Activated naive CD4-positive, alpha-beta T cell treated with anti-CD3 and anti-CD28 coated beads for 36 hours (primary cell): ENCODE measurements at regions of chr12 and their contacts with region 1.

Region 1: DNA sequence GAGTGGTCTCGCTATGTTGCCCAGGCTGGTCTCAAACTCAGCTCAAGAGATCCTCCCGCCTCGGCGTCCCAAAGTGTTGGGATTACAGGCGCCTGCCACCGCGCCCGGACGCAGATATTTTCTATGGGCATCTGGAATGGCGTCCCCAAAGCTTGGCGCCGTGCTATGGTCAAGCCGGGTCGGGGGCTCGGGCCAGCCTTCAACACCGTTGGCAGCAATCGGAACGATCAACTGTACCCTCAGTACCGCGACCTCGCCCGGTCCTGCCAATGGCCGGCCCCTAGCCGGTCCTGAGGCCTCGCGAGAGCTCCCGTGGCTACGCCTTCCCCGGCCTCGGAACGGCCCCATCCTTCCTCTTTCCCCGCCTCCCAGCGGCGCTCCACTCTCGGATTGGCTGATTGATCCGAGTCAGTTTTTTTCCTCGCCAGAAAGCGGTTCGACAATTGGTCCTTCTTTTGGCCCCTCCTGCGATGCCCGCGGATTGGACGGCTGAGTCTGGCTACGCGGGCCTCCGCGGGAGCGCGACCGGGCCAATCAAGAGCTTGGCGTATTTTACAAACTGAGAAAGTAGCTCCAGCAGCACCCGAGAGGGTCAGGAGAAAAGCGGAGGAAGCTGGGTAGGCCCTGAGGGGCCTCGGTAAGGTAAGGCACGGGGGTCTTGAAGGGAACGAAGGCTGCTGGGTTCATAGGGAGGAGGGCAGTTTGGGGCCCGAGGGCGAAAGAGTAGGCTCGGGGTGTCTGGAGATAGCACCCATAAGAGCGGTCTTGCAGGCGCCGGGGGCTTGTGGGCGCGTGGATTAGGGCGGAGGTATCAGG is at the start of gene TROAP:
- DNase-seq: peak; percentile 99
- H3K4me3 Mint-ChIP-seq: peak within 1 kb of the TSS; percentile 98
- H3K27ac Mint-ChIP-seq: peak within 1 kb of the TSS; percentile 91
- H3K4me1 Mint-ChIP-seq: peaks cover 17% of the 10 kb centered on the region
- H3K27me3 Mint-ChIP-seq: no peaks in the 10 kb centered on the region
- total RNA-seq, gene TROAP: 67.4 to 68.8 TPM

Region 2: GRCh38 chr12:49154221-49154620 is 168.7 kb before region 1 on chr12:
- CTCF ChIA-PET with region 1: no interaction called
- intact Hi-C with region 1: no loop called
- DNase-seq: no peak
- H3K4me3 Mint-ChIP-seq: no peak overlapping the region
- H3K27ac Mint-ChIP-seq: no peak overlapping the region
- H3K4me1 Mint-ChIP-seq: peaks cover 2% of the 10 kb centered on the region
- H3K27me3 Mint-ChIP-seq: no peaks in the 10 kb centered on the region

Region 3: GRCh38 chr12:49188914-49189367 is 134.0 kb before region 1 on chr12 and contains the start of gene TUBA1A:
- CTCF ChIA-PET with region 1: no interaction called
- intact Hi-C with region 1: loop called (anchors 1 kb)
- DNase-seq: peak; percentile 97
- H3K4me3 Mint-ChIP-seq: peak within 1 kb of the TSS; percentile 84
- H3K27ac Mint-ChIP-seq: peak within 1 kb of the TSS; percentile 86
- H3K4me1 Mint-ChIP-seq: peaks cover 13% of the 10 kb centered on the region
- H3K27me3 Mint-ChIP-seq: no peaks in the 10 kb centered on the region
- total RNA-seq, gene TUBA1A: 47.4 to 49.1 TPM

Region 4: GRCh38 chr12:49336645-49337584 is 14.0 kb after region 1 on chr12 and contains the start of gene C1QL4:
- CTCF ChIA-PET with region 1: interaction called, 29 read pairs
- intact Hi-C with region 1: loop called (anchors 1 kb)
- DNase-seq: peak; percentile 90
- H3K4me3 Mint-ChIP-seq: peak within 1 kb of the TSS; percentile 57
- H3K27ac Mint-ChIP-seq: no peak within 1 kb of the TSS
- H3K4me1 Mint-ChIP-seq: peaks cover 25% of the 10 kb centered on the region
- H3K27me3 Mint-ChIP-seq: peaks cover 78% of the 10 kb centered on the region
- total RNA-seq, gene C1QL4: not detected

Region 5: GRCh38 chr12:49366652-49367380 is 43.9 kb after region 1 on chr12:
- CTCF ChIA-PET with region 1: no interaction called
- intact Hi-C with region 1: loop called (anchors 1 kb)
- DNase-seq: peak; percentile 90
- H3K4me3 Mint-ChIP-seq: peak overlapping the region; percentile 95
- H3K27ac Mint-ChIP-seq: peak overlapping the region; percentile 95
- H3K4me1 Mint-ChIP-seq: peaks cover 23% of the 10 kb centered on the region
- H3K27me3 Mint-ChIP-seq: no peaks in the 10 kb centered on the region

Region 6: GRCh38 chr12:49740930-49741881 is 418.3 kb after region 1 on chr12 and contains the start of gene TMBIM6:
- CTCF ChIA-PET with region 1: no interaction called
- intact Hi-C with region 1: loop called (anchors 2 kb)
- DNase-seq: peak; percentile 99
- H3K4me3 Mint-ChIP-seq: peak within 1 kb of the TSS; percentile 100
- H3K27ac Mint-ChIP-seq: peak within 1 kb of the TSS; percentile 100
- H3K4me1 Mint-ChIP-seq: peaks cover 34% of the 10 kb centered on the region
- H3K27me3 Mint-ChIP-seq: no peaks in the 10 kb centered on the region
- total RNA-seq, gene TMBIM6: 466 to 498 TPM